ENCODE measurements at regions of chr17 and their contacts with region 1.

Region 1: GRCh38 chr17:41322094-41322902 is 6.8 kb upstream of the KRTAP17-1 start:
- DNase-seq: no peak
- H3K4me3 Mint-ChIP-seq: no peak overlapping the region
- H3K27ac Mint-ChIP-seq: no peak overlapping the region
- H3K4me1 Mint-ChIP-seq: peaks cover 23% of the 10 kb centered on the region
- H3K27me3 Mint-ChIP-seq: no peaks in the 10 kb centered on the region
- CTCF ChIP-seq: peak; percentile 80

Region 2: DNA sequence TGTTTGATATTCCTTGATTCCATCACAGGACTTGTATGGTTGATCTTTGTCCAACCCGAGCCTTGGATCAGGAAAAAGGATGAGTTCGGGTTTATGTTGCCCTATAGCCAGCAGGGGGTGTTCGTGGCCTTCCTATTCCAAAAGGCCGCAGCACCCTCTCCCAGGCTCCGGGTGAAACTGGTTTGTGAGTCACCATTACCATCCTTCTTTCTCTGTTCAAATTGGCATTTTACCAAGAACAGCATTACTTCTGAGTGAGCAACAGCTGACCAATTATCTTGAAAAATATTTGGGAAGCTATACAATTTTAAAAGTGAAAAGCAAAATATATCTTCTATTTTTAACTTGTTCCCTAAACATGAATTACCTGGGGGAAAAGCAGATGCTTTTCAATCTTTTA is 412.9 kb before region 1 on chr17:
- CTCF ChIA-PET with region 1: interaction called, 11 read pairs
- intact Hi-C with region 1: loop called (anchors 1 kb)
- DNase-seq: peak; percentile 99
- H3K4me3 Mint-ChIP-seq: no peak overlapping the region
- H3K27ac Mint-ChIP-seq: peak overlapping the region; percentile 86
- H3K4me1 Mint-ChIP-seq: peaks cover 94% of the 10 kb centered on the region
- H3K27me3 Mint-ChIP-seq: no peaks in the 10 kb centered on the region
- CTCF ChIP-seq: peak; percentile 98

Region 3: GRCh38 chr17:41347869-41348773 is 25.8 kb after region 1 on chr17:
- CTCF ChIA-PET with region 1: no interaction called
- intact Hi-C with region 1: no loop called
- DNase-seq: no peak
- H3K4me3 Mint-ChIP-seq: no peak overlapping the region
- H3K27ac Mint-ChIP-seq: no peak overlapping the region
- H3K4me1 Mint-ChIP-seq: peaks cover 7% of the 10 kb centered on the region
- H3K27me3 Mint-ChIP-seq: peaks cover 13% of the 10 kb centered on the region
- CTCF ChIP-seq: no peak

Region 4: DNA sequence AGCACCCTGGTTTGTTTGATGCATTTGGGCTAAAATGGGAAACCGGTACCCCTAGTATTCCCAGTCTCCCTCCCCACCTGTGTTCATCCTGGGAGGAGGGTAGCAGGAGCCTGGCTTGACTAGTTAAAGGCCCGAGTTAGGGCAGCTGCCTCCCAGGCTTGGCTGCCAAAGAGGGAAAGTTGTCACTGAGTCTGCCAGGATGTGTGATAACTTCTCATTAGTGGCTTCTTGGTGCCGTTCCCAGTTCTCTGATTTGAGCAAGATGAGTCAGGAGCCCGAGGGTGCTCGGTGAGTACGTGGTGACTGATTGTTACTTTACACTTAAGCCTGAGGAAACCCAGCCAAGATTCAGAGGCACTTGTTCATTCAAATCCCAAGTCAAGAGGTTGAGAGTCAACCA is 142.4 kb after region 1 on chr17:
- CTCF ChIA-PET with region 1: no interaction called
- intact Hi-C with region 1: no loop called
- DNase-seq: peak; percentile 74
- H3K4me3 Mint-ChIP-seq: no peak overlapping the region
- H3K27ac Mint-ChIP-seq: peak overlapping the region; percentile 7
- H3K4me1 Mint-ChIP-seq: peaks cover 13% of the 10 kb centered on the region
- H3K27me3 Mint-ChIP-seq: no peaks in the 10 kb centered on the region
- CTCF ChIP-seq: no peak

Region 5: GRCh38 chr17:42112552-42113176 is 790.4 kb after region 1 on chr17 and contains the start of gene DHX58:
- CTCF ChIA-PET with region 1: no interaction called
- intact Hi-C with region 1: no loop called
- DNase-seq: peak; percentile 83
- H3K4me3 Mint-ChIP-seq: peak within 1 kb of the TSS; percentile 80
- H3K27ac Mint-ChIP-seq: peak within 1 kb of the TSS; percentile 88
- H3K4me1 Mint-ChIP-seq: peaks cover 7% of the 10 kb centered on the region
- H3K27me3 Mint-ChIP-seq: no peaks in the 10 kb centered on the region
- CTCF ChIP-seq: no peak
- total RNA-seq, gene DHX58: 45.6 and 77.5 TPM in 2 replicates